CD8-positive, alpha-beta T cell (primary cell): ENCODE measurements at regions of chr11 and their contacts with region 1.

Region 1: GRCh38 chr11:9137293-9138132 is 46.1 kb upstream of the SCUBE2 start:
- DNase-seq: peak; percentile 28 to 76 (median 62)
- ATAC-seq: peak; percentile 96
- H3K4me3 ChIP-seq: no peak overlapping the region
- H3K4me3 Mint-ChIP-seq: no peak overlapping the region
- H3K27ac ChIP-seq: no peak overlapping the region
- H3K27ac Mint-ChIP-seq: no peak overlapping the region
- H3K4me1 ChIP-seq: no peaks in the 10 kb centered on the region
- H3K4me1 Mint-ChIP-seq: peaks cover 9% of the 10 kb centered on the region
- H3K27me3 ChIP-seq: no peaks in the 10 kb centered on the region
- H3K27me3 Mint-ChIP-seq: no peaks in the 10 kb centered on the region
- CTCF ChIP-seq: peak; percentile 77

Region 2: DNA sequence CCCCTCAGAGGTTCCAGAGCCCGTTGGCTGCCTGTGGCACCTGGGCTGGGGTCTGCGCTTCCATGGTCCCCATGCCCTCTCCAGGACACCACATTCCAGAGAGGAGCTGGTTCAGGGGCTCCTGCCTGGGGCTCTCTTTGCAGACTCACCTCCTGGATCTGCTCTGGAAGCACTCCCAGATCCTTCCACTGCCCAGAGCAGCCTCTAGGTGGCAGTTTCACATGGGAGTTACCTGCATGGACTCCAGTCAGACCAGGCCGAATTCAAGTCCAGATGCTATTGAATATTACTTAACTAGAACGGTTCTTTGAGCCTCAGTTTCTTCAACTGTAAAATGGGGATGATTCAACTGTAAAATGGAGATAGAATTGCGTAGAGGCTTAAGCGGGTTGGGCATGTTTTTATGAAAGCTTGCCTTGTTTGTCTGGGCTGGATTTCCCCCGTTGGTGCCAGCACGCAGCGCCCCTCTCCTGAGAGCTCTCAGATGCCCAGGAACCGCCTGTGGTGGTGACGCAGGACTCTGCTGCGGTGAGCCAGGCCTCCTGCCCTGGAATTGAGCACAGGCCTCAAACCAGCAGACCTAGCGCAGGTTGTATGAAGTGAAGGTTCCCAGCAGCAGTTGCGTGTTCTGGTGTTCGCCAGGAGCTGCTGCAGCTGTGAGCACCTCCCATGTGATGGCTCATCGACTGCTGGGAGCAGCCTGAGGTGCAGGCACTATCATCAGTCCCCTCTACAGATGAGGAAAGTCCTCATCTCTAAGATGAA is 918.1 kb before region 1 on chr11:
- CTCF ChIA-PET with region 1: no interaction called
- POLR2A ChIA-PET with region 1: no interaction called
- intact Hi-C with region 1: loop called in 1 of 2 experiments (anchors 5 kb)
- DNase-seq: peak in 1 of 9 experiments; percentile 16
- ATAC-seq: no peak
- H3K4me3 ChIP-seq: no peak overlapping the region
- H3K4me3 Mint-ChIP-seq: no peak overlapping the region
- H3K27ac ChIP-seq: no peak overlapping the region
- H3K27ac Mint-ChIP-seq: no peak overlapping the region
- H3K4me1 ChIP-seq: no peaks in the 10 kb centered on the region
- H3K4me1 Mint-ChIP-seq: no peaks in the 10 kb centered on the region
- H3K27me3 ChIP-seq: no peaks in the 10 kb centered on the region
- H3K27me3 Mint-ChIP-seq: peaks cover 5% of the 10 kb centered on the region
- CTCF ChIP-seq: no peak

Region 3: DNA sequence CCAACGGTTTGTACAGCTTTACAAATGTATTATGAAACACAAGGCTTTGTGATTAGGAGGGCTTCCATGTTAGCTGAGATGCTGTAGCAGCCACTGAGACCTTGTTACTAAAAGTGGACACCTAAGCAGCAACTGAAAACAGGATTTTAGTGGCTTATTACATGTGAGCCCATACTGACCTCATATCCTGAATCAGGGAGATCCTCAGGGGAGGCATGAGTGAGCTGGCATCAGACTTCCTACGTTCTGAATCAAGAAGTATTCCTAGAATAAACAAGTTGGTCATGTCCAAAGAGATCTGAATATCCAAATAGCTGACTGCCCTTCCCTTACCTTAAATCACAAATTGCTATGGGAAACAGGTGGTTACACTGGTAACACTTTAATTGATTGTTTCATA is 13.0 kb after region 1 on chr11:
- CTCF ChIA-PET with region 1: interaction called, 18 read pairs
- POLR2A ChIA-PET with region 1: interaction called, 4 read pairs
- intact Hi-C with region 1: no loop called
- DNase-seq: no peak
- ATAC-seq: no peak
- H3K4me3 ChIP-seq: no peak overlapping the region
- H3K4me3 Mint-ChIP-seq: no peak overlapping the region
- H3K27ac ChIP-seq: no peak overlapping the region
- H3K27ac Mint-ChIP-seq: no peak overlapping the region
- H3K4me1 ChIP-seq: no peaks in the 10 kb centered on the region
- H3K4me1 Mint-ChIP-seq: peaks cover 2% of the 10 kb centered on the region
- H3K27me3 ChIP-seq: no peaks in the 10 kb centered on the region
- H3K27me3 Mint-ChIP-seq: no peaks in the 10 kb centered on the region
- CTCF ChIP-seq: no peak